ENCODE measurements at regions of chr7 and their contacts with region 1.

Region 1: DNA sequence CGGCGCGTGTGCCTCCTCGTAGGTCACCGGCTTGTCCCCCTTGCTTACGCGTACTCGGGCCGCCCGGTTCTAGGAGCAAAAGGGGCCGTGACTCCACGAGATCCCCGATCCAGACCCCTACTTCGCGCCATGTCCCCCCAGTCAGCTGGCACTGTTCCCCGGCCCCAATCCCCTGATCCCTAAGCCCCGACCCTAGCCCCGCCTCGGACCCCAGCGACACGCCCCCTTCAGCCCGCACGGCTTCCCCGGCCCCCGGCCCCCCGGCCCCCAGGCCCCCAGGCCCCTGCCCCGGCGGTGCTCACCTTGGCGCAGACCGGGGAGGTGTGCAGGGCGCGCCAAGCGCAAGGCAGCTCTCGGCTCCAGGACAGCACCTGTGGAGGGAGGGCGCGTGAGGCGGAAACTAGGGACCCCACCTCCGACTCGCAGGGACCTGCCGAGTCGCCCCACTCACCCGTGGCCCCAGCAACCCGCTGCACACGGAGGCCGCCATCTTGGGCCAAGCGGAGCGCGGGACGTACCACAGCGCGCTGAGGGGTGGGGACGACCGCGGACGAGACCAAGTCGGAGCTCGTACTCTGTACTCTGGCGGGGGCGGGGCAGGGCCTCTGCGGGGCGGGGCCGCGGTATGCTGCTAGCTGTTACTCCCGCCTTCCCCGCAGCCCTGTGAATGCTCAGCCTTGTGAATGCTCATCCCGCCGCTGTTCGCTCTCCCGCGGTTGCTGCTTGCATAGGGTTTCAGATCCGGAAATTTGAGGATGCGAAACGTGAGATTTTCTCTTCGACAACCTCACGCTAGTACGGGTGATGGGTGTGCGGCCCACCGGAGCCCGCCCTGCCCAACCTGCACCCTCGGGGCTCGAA is at the start of gene MRPS24:
- DNase-seq: peak; percentile 97

Region 2: DNA sequence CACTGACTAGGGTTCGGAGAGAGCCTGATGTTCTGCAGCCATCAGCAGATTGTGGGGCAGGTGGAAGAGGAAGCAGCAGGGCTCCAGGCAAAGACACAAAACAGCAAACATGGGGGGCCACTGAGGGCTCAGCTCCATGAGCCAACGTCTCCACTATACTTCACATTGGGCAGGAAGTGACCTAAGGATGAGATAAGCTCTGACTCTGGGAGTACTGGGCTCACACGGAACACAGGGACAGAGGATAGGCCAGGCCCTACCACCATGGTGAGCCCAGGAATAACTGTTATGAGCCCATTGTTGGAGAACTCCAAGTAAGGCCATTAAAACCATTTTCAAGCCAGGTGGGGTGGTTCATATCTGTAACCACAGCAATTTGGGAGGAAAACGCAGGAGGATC is 15.0 kb after region 1 on chr7:
- CTCF ChIA-PET with region 1: no interaction called
- POLR2A ChIA-PET with region 1: interaction called, 10 read pairs
- DNase-seq: no peak

Region 3: GRCh38 chr7:43915907-43916306 is 46.7 kb after region 1 on chr7:
- CTCF ChIA-PET with region 1: no interaction called
- POLR2A ChIA-PET with region 1: no interaction called
- DNase-seq: no peak

Measured in HEK293T (cell line).